Activated naive CD4-positive, alpha-beta T cell treated with anti-CD3 and anti-CD28 coated beads for 36 hours (primary cell): ENCODE measurements at regions of chr3 and their contacts with region 1.

Region 1: GRCh38 chr3:13648060-13649001 is 99.4 kb downstream of the FBLN2 start:
- DNase-seq: peak; percentile 82
- H3K4me3 Mint-ChIP-seq: no peak overlapping the region
- H3K27ac Mint-ChIP-seq: no peak overlapping the region
- H3K4me1 Mint-ChIP-seq: peaks cover 18% of the 10 kb centered on the region
- H3K27me3 Mint-ChIP-seq: peaks cover 14% of the 10 kb centered on the region

Region 2: DNA sequence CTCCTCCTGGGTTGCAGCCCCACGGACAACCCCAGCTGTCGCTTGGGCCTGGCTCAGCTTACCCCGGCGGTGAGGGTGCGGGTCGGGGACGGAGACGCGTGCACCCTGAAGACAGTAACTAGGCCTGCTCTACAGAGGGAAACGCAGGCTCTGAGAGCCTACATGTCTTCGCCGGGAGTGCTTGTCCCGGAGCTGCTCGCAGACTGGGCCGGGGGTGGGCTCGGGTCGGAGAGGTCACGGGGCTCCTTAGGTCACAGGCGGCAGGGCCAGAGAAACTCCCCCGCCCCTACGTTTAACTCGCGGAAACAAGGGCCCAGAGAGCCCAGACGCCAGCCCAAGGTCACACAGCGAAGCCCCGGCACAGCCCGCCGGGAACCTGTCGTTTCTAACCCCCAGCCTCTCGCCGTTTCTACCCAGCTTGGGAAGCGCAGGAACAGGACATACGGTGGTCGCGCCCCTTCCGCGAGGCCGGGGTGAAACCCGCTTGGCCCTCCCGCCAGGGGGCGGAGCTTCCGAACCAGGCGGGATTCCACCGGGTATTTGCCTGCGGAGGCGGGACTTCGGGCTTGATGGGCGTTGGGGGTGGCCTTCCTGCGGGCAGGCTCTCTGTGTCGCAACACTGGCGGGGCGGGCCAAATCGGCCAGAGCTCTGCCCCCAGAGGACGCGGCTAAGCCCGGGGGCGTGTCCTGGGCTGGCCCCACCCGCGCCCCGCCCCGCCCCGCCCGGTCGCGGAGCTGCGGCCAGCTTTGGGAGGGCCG is 168.6 kb before region 1 on chr3 and contains the start of gene HDAC11:
- CTCF ChIA-PET with region 1: interaction called, 8 read pairs
- intact Hi-C with region 1: loop called (anchors 5 kb)
- DNase-seq: peak; percentile 99
- H3K4me3 Mint-ChIP-seq: peak within 1 kb of the TSS; percentile 92
- H3K27ac Mint-ChIP-seq: peak within 1 kb of the TSS; percentile 82
- H3K4me1 Mint-ChIP-seq: peaks cover 12% of the 10 kb centered on the region
- H3K27me3 Mint-ChIP-seq: no peaks in the 10 kb centered on the region
- total RNA-seq, gene HDAC11: 1.6 to 2.4 TPM

Region 3: DNA sequence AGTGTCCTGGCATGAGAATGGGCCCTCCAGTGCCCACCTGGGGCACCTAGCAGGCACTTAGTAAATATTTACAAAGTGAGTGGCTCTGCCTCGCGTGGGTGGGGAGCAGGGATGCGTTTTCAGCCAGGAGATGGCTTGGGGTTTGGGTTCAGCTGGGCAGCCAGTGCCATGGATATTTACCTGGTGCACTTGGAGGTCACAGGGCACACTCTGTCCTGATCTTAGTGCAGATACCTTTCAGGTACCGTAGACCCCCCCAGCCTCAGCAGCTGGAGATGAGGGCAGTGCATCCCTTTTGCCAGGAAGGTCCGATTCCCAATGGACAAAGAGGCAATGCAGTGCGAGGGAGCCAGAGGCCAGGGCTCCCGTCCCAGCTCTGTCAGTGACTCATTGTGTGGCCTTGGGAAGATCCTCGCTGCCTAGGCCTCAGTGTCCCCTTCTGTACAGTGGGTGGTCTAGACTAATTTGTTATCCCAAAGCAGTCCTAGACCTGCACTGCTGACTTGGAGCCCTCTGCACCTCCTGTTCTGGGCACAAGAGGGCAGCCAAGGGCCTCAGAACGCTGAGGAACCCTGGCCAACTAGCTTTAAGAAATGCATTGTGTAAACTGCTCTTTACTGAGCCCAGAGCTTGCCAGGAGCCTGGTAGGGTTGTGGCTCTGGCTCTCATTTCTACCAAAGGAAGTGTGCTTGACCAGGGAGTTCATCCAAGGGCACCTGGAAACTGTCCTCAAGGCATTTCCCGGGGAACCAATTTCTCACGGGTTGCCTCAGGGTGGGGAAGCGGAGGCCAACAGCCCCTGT is 152.2 kb before region 1 on chr3:
- CTCF ChIA-PET with region 1: interaction called, 344 read pairs
- intact Hi-C with region 1: loop called (anchors 1 kb)
- DNase-seq: peak; percentile 83
- H3K4me3 Mint-ChIP-seq: no peak overlapping the region
- H3K27ac Mint-ChIP-seq: no peak overlapping the region
- H3K4me1 Mint-ChIP-seq: no peaks in the 10 kb centered on the region
- H3K27me3 Mint-ChIP-seq: no peaks in the 10 kb centered on the region

Region 4: DNA sequence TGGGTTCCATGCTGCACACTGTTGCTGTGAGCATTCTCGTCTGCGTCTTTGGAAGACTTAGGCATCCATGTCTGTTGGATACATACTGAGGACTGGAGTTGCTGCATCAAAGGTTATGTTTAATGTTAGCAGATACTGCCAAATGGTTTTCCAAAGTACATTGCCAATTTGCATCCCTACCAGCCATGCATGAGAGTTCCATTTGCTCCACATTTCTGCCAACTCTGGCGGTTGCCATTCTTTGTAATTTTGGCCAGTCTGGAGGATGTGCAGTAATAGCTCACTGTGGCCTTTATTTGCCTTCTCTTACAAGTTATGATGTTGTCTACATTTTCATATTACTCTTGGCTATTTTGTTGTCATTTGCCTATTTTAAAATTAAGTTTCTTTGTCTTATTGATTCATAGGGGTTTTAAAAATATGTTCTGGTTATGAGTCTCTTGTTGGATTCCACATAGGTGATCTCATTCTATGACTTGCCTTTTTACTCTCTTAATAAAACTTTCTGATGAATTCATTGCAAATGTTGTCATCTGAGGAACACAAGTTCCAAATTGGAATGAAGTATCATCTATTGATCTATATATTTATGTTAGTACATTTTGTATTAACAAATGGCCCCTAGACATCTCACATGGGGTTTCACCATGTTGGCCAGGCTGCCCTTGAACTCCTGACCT is 57.4 kb before region 1 on chr3:
- CTCF ChIA-PET with region 1: interaction called, 13 read pairs
- intact Hi-C with region 1: no loop called
- DNase-seq: no peak
- H3K4me3 Mint-ChIP-seq: no peak overlapping the region
- H3K27ac Mint-ChIP-seq: no peak overlapping the region
- H3K4me1 Mint-ChIP-seq: no peaks in the 10 kb centered on the region
- H3K27me3 Mint-ChIP-seq: no peaks in the 10 kb centered on the region